Natural killer cell (primary cell): ENCODE measurements at regions of chr10 and their contacts with region 1.

Region 1: GRCh38 chr10:72337020-72337629 is 17.6 kb downstream of the DNAJB12 start:
- DNase-seq: peak; percentile 73 to 83
- ATAC-seq: peak in 2 of 3 donors; percentile 13 to 21
- H3K4me3 ChIP-seq: no peak overlapping the region
- H3K4me3 Mint-ChIP-seq: no peak overlapping the region
- H3K27ac ChIP-seq: peak overlapping the region; percentile 16
- H3K27ac Mint-ChIP-seq: peak overlapping the region; percentile 96 to 97
- H3K4me1 ChIP-seq: peaks cover 68% of the 10 kb centered on the region
- H3K4me1 Mint-ChIP-seq: peaks cover 46 to 54% of the 10 kb centered on the region in 2 donors
- H3K27me3 ChIP-seq: no peaks in the 10 kb centered on the region
- H3K27me3 Mint-ChIP-seq: no peaks in the 10 kb centered on the region
- CTCF ChIP-seq: peak; percentile 98

Region 2: DNA sequence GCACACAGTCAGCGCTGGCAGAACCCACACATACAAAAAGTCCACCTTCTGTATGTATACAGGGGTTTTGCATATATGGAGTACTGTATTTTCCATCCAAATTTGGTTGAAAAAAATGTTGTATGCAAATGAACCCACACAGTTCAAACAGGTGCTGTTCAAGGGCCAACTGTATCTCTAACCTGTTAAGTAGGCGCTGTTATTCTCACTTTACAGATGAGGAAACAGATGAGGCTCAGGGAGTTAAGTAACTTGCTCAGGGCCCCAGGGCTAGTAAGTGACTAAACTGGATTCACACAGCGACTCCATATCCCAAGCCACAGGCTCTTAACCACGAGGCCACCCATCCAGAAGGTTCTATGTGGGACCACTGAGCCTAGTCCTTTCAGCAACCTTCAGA is 687.5 kb before region 1 on chr10:
- intact Hi-C with region 1: no loop called
- DNase-seq: no peak
- ATAC-seq: no peak
- H3K4me3 ChIP-seq: no peak overlapping the region
- H3K4me3 Mint-ChIP-seq: no peak overlapping the region
- H3K27ac ChIP-seq: no peak overlapping the region
- H3K27ac Mint-ChIP-seq: no peak overlapping the region
- H3K4me1 ChIP-seq: peaks cover 9% of the 10 kb centered on the region
- H3K4me1 Mint-ChIP-seq: no peaks in the 10 kb centered on the region
- H3K27me3 ChIP-seq: no peaks in the 10 kb centered on the region
- H3K27me3 Mint-ChIP-seq: no peaks in the 10 kb centered on the region
- CTCF ChIP-seq: no peak

Region 3: DNA sequence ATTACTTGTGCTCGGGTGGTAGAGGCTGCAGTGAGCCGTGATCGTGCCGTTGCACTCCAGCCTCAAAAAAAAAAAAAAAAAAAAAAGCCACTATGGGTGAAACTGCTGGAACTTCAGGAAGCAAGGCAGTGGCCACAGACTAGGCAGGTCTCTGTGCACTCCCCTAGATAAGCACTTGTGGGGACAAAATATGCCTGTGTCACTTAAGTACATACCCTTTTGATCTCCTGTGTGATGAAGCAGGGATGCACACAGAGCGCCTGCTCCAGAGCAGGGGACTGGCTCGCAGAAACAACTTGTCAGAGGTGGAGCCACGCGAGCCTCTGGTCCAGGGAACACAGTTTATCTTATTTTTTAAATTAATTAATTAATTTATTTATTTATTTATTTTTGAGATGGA is 443.2 kb before region 1 on chr10:
- intact Hi-C with region 1: loop called (anchors 1 kb)
- DNase-seq: no peak
- ATAC-seq: no peak
- H3K4me3 ChIP-seq: no peak overlapping the region
- H3K4me3 Mint-ChIP-seq: no peak overlapping the region
- H3K27ac ChIP-seq: no peak overlapping the region
- H3K27ac Mint-ChIP-seq: no peak overlapping the region
- H3K4me1 ChIP-seq: peaks cover 24% of the 10 kb centered on the region
- H3K4me1 Mint-ChIP-seq: peaks cover 6% of the 10 kb centered on the region in 2 donors
- H3K27me3 ChIP-seq: peaks cover 4% of the 10 kb centered on the region
- H3K27me3 Mint-ChIP-seq: peaks cover 5 to 7% of the 10 kb centered on the region in 2 donors
- CTCF ChIP-seq: no peak

Region 4: DNA sequence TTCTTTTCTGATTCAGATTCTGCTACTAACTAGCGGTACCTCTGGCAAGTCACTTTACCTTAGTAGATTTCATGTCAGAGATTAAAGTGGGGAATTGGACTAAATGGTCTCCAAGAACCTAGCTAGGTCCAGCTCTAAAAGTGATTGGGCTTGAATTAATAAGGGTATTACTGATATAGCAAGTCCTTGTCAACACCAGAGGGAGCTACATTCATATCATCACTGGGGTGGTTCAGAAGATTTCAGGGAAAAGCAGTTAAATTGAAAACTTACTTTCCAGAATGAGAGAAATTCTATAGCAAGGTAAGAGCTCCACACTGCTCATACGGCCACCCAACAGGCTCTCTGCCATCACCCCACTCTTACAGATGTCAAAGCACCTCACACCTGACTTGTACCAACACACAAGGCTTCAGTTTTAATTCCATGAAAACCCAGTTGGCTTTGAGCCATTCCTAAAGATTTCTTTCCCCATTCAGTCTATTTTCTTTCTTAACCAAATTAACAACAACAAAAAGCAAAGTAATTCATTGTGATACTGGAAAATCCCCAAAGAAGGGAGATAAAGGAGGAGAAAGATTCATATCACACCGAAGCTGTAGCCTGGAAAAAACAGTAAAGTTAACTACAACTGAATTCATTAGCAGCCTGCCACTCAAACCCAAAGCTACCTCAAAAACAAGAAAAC is 210.8 kb before region 1 on chr10:
- intact Hi-C with region 1: loop called (anchors 2 kb)
- DNase-seq: peak in 1 of 2 donors; percentile 57
- ATAC-seq: peak in 1 of 3 donors; percentile 30
- H3K4me3 ChIP-seq: no peak overlapping the region
- H3K4me3 Mint-ChIP-seq: no peak overlapping the region
- H3K27ac ChIP-seq: no peak overlapping the region
- H3K27ac Mint-ChIP-seq: no peak overlapping the region
- H3K4me1 ChIP-seq: no peaks in the 10 kb centered on the region
- H3K4me1 Mint-ChIP-seq: peaks cover 0 to 10% of the 10 kb centered on the region in 2 donors
- H3K27me3 ChIP-seq: no peaks in the 10 kb centered on the region
- H3K27me3 Mint-ChIP-seq: no peaks in the 10 kb centered on the region
- CTCF ChIP-seq: peak; percentile 29

Region 5: DNA sequence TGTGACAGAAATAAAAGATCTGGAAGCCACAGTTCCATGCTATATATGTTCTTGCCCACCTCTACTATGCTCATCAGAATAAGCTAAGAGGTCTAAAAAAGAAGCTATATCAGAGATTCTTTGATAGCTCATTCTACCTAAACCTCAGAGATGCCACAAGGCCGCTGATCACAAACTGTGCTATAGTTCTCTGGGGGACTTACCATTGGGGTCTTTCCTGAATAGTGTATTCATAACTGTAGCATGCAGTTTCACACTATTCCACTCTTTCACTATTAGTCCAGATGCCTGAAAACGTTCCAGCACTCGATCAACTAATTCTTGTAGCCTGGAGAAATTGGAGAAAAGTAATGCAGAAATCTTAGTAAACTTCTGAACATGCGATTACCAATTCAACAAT is 204.3 kb before region 1 on chr10:
- intact Hi-C with region 1: loop called (anchors 1 kb)
- DNase-seq: no peak
- ATAC-seq: no peak
- H3K4me3 ChIP-seq: no peak overlapping the region
- H3K4me3 Mint-ChIP-seq: no peak overlapping the region
- H3K27ac ChIP-seq: no peak overlapping the region
- H3K27ac Mint-ChIP-seq: no peak overlapping the region
- H3K4me1 ChIP-seq: no peaks in the 10 kb centered on the region
- H3K4me1 Mint-ChIP-seq: peaks cover 9 to 20% of the 10 kb centered on the region in 2 donors
- H3K27me3 ChIP-seq: no peaks in the 10 kb centered on the region
- H3K27me3 Mint-ChIP-seq: no peaks in the 10 kb centered on the region
- CTCF ChIP-seq: no peak